CD4-positive, alpha-beta memory T cell (primary cell): ENCODE measurements at regions of chr12 and their contacts with region 1.

Region 1: DNA sequence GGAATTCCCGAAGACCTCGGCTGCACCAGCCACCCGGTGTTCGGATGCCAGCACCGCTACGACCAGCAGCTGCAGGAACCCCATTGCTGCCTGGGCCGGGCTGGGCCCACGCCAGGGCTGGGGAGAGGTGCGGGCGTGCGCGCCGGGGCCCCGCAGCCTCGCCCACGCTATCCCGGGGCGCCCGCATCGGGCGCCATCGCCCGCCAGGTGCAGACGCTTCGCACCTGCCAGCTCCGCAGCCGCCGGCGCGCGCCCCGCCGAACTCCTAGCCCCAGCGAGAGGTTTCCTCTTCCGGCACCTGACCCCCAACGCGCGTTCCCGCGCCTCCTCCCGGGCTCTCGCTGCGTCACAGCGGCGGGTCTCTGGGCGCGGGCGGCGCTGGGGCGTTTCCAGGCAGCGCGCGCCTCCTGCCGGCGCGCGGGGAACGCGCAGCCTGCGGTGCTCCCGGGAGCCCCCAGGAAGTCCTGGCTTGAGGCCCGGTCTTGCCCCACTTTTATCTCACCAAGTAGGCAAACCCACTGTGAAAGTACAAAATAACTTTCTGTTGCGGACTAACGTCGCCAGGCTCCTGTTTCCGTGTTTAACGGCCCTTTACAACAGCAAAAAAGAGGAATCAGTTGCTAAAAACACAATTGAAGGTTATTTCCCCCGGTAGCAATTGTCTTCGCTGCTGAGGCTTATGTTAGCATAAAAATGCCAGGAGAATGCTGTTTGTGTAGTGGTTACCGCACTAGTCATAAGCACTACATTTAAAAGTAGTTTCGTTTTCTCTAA is at the start of gene TM7SF3:
- DNase-seq: peak; percentile 97 to 98 (median 97)
- H3K4me3 ChIP-seq: peak within 1 kb of the TSS; percentile 71 to 82
- H3K4me3 Mint-ChIP-seq: peak within 1 kb of the TSS; percentile 93 to 97 (median 94)
- H3K27ac ChIP-seq: peak within 1 kb of the TSS; percentile 92
- H3K27ac Mint-ChIP-seq: peak within 1 kb of the TSS; percentile 92 to 98 (median 96)
- H3K4me1 ChIP-seq: peaks cover 51% of the 10 kb centered on the region
- H3K4me1 Mint-ChIP-seq: peaks cover 31 to 59% (median 43%) of the 10 kb centered on the region in 4 donors
- H3K27me3 ChIP-seq: no peaks in the 10 kb centered on the region
- H3K27me3 Mint-ChIP-seq: no peaks in the 10 kb centered on the region
- total RNA-seq, gene TM7SF3: 27.7 to 29.2 TPM

Region 2: DNA sequence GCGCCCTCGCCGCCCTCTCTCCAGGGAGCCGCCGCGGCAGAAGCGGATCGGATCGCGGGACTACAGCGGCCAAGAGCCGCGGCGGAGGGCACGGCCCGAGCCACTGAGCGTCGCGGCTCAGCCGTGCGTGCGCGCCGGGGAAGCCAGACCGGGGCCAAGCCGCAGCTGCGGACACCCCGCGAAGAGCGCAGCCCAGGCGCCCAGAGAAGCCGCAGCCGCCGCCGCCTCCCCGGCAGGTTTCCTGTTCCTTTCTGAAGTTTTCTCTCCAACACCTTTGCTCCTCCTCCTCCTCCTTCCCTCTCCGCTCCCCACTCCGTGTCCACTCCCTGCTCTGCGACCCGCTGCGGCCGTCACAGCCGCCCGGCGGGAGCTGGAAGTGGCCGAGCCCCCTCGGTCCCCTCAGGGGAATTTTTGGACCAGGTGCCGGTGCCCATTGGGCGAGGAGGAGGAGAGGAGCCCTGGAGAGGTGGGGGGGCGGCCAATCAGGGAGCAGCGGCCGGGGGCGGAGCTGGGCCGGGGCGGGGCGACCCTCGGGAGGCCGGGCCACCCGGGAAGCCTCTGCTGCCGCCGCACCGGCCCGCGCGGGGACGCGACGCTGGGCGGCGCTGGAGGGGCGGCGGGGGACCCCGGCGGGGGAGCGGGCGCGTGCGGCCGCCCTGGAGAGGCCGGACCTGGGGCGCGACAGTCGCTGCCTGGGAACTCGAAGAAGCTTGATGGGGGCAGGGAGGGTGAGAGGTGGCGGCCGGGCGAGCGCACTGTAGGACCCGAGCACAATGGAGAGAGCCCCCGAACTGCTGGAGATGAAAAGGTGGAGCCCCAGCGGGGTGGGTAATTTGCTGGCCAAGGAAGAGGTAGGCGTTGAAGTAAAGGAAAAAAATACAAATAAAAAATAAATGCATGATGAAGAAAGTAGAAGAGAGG is 181.2 kb before region 1 on chr12 and contains the start of gene ITPR2:
- CTCF ChIA-PET with region 1: interaction called, 21 read pairs
- POLR2A ChIA-PET with region 1: interaction called, 45 read pairs
- intact Hi-C with region 1: loop called (anchors 1 kb)
- DNase-seq: peak; percentile 88 to 92 (median 89)
- H3K4me3 ChIP-seq: peak within 1 kb of the TSS; percentile 90 to 91
- H3K4me3 Mint-ChIP-seq: peak within 1 kb of the TSS; percentile 97 to 99 (median 99)
- H3K27ac ChIP-seq: peak within 1 kb of the TSS; percentile 69
- H3K27ac Mint-ChIP-seq: peak within 1 kb of the TSS; percentile 96 to 99 (median 99)
- H3K4me1 ChIP-seq: peaks cover 25% of the 10 kb centered on the region
- H3K4me1 Mint-ChIP-seq: peaks cover 31 to 55% (median 41%) of the 10 kb centered on the region in 4 donors
- H3K27me3 ChIP-seq: no peaks in the 10 kb centered on the region
- H3K27me3 Mint-ChIP-seq: no peaks in the 10 kb centered on the region
- total RNA-seq, gene ITPR2: 54.7 to 55.6 TPM

Region 3: GRCh38 chr12:26937875-26938700 is 76.2 kb before region 1 on chr12 and contains the starts of genes FGFR1OP2 and INTS13:
- CTCF ChIA-PET with region 1: interaction called, 16 read pairs
- POLR2A ChIA-PET with region 1: interaction called, 28 read pairs
- intact Hi-C with region 1: loop called (anchors 1 kb)
- DNase-seq: peak; percentile 95 to 96 (median 96)
- H3K4me3 ChIP-seq: peak within 1 kb of the TSS; percentile 82 to 92
- H3K4me3 Mint-ChIP-seq: peak within 1 kb of the TSS; percentile 91 to 99 (median 98)
- H3K27ac ChIP-seq: peak within 1 kb of the TSS; percentile 89
- H3K27ac Mint-ChIP-seq: peak within 1 kb of the TSS; percentile 90 to 100 (median 99)
- H3K4me1 ChIP-seq: peaks cover 66% of the 10 kb centered on the region
- H3K4me1 Mint-ChIP-seq: peaks cover 44 to 85% (median 58%) of the 10 kb centered on the region in 4 donors
- H3K27me3 ChIP-seq: no peaks in the 10 kb centered on the region
- H3K27me3 Mint-ChIP-seq: no peaks in the 10 kb centered on the region
- total RNA-seq, gene FGFR1OP2: 92.2 to 94.2 TPM
- total RNA-seq, gene INTS13: 25.6 to 28.7 TPM

Region 4: GRCh38 chr12:27024291-27024690 is 10.0 kb after region 1 on chr12:
- CTCF ChIA-PET with region 1: interaction called, 29 read pairs
- POLR2A ChIA-PET with region 1: interaction called, 38 read pairs
- intact Hi-C with region 1: loop called (anchors 1 kb)
- DNase-seq: no peak
- H3K4me3 ChIP-seq: no peak overlapping the region
- H3K4me3 Mint-ChIP-seq: peak overlapping the region in 6 of 8 donors; percentile 57 to 100 (median 98)
- H3K27ac ChIP-seq: no peak overlapping the region
- H3K27ac Mint-ChIP-seq: peak overlapping the region in 2 of 7 donors; percentile 23 to 98
- H3K4me1 ChIP-seq: peaks cover 30% of the 10 kb centered on the region
- H3K4me1 Mint-ChIP-seq: peaks cover 31 to 51% (median 37%) of the 10 kb centered on the region in 4 donors
- H3K27me3 ChIP-seq: no peaks in the 10 kb centered on the region
- H3K27me3 Mint-ChIP-seq: peaks cover 0 to 2% of the 10 kb centered on the region in 2 donors

Region 5: GRCh38 chr12:27243804-27244683 is 229.8 kb after region 1 on chr12 and contains the start of gene STK38L:
- CTCF ChIA-PET with region 1: interaction called, 5 read pairs
- POLR2A ChIA-PET with region 1: interaction called, 4 read pairs
- intact Hi-C with region 1: loop called (anchors 2 kb)
- DNase-seq: peak; percentile 95 to 97 (median 97)
- H3K4me3 ChIP-seq: peak within 1 kb of the TSS; percentile 85 to 87
- H3K4me3 Mint-ChIP-seq: peak within 1 kb of the TSS; percentile 97 to 99 (median 98)
- H3K27ac ChIP-seq: peak within 1 kb of the TSS; percentile 77
- H3K27ac Mint-ChIP-seq: peak within 1 kb of the TSS; percentile 93 to 99 (median 99)
- H3K4me1 ChIP-seq: peaks cover 27% of the 10 kb centered on the region
- H3K4me1 Mint-ChIP-seq: peaks cover 32 to 58% (median 47%) of the 10 kb centered on the region in 4 donors
- H3K27me3 ChIP-seq: no peaks in the 10 kb centered on the region
- H3K27me3 Mint-ChIP-seq: no peaks in the 10 kb centered on the region
- total RNA-seq, gene STK38L: 17.2 to 21.8 TPM

Region 6: GRCh38 chr12:27462151-27462694 is 448.0 kb after region 1 on chr12:
- CTCF ChIA-PET with region 1: no interaction called
- POLR2A ChIA-PET with region 1: no interaction called
- intact Hi-C with region 1: no loop called
- DNase-seq: no peak
- H3K4me3 ChIP-seq: no peak overlapping the region
- H3K4me3 Mint-ChIP-seq: peak overlapping the region in 2 of 8 donors; percentile 19 to 25
- H3K27ac ChIP-seq: no peak overlapping the region
- H3K27ac Mint-ChIP-seq: peak overlapping the region in 2 of 7 donors; percentile 20 to 51
- H3K4me1 ChIP-seq: peaks cover 12% of the 10 kb centered on the region
- H3K4me1 Mint-ChIP-seq: peaks cover 0 to 16% (median 10%) of the 10 kb centered on the region in 4 donors
- H3K27me3 ChIP-seq: no peaks in the 10 kb centered on the region
- H3K27me3 Mint-ChIP-seq: peaks cover 3 to 14% of the 10 kb centered on the region in 2 donors